ENCODE measurements at regions of chr7 and their contacts with region 1.

Region 1: DNA sequence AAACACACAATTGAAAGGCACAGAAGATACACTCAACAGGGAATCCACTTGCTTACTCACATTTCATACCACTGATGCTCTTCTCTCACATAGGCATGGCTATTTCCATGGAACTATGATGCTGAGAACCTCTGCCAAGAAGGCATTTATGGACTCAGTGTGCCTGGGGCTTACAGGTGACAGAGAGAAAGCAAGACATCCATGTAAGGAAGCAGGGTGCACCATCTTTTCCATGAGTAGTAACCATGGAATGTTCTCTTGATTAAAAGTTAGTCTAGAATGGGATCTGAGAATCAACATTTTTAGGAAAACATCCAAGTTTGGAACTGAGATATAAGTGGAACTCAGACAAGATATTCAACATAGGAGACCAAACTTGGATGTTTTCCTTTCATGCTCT is 52.5 kb upstream of the MACC1 start:
- DNase-seq: no peak
- ATAC-seq: peak in 1 of 8 donors; percentile 44
- H3K4me3 ChIP-seq: no peak overlapping the region
- H3K27ac ChIP-seq: peak overlapping the region in 4 of 10 donors; percentile 10 to 56 (median 31)
- H3K4me1 ChIP-seq: peaks cover 0 to 7% (median 0%) of the 10 kb centered on the region in 9 donors
- H3K27me3 ChIP-seq: no peaks in the 10 kb centered on the region
- CTCF ChIP-seq: no peak

Region 2: DNA sequence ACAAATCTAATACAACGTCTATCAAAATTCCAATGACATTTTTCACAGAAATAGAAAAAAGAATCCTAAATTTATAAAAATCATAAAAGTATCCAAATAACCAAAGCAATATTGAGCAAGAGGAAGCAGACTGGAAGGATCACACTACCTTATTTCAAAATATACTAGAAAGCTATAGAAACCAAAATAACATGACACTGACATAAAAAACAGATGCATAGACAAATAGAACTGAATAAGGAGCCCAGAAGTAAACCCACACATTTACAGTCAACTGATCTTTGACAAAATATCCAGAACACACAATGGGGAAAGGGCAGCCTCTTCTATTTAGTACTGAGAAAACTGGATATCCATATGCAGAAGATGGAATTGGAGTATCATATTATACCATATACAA is 270.0 kb before region 1 on chr7:
- intact Hi-C with region 1: no loop called
- DNase-seq: no peak
- ATAC-seq: no peak
- H3K4me3 ChIP-seq: no peak overlapping the region
- H3K27ac ChIP-seq: no peak overlapping the region
- H3K4me1 ChIP-seq: no peaks in the 10 kb centered on the region
- H3K27me3 ChIP-seq: no peaks in the 10 kb centered on the region
- CTCF ChIP-seq: no peak

Region 3: GRCh38 chr7:20227291-20227795 is 42.4 kb before region 1 on chr7:
- intact Hi-C with region 1: loop called in 1 of 10 experiments (anchors 2 kb)
- DNase-seq: no peak
- ATAC-seq: no peak
- H3K4me3 ChIP-seq: no peak overlapping the region
- H3K27ac ChIP-seq: no peak overlapping the region
- H3K4me1 ChIP-seq: peaks cover 0 to 26% (median 0%) of the 10 kb centered on the region in 9 donors
- H3K27me3 ChIP-seq: no peaks in the 10 kb centered on the region
- CTCF ChIP-seq: no peak

Region 4: DNA sequence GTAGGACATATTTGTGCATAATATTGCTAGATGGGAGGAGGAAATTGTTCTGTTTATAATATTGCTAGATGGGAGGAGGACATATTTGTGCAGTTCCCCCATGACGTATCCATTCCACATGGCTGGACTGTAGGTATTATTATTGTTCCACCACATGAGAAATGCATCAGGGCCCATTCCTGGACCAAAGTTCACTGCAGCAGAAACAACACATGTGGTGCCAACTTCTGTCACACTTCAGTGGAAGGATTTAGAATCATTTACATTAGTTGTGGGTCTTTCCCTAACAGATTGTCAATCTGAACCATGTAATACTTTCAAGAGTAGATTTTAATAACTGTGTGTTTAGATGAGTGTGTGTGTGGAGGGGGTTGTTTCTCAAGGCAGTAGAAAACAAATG is 19.8 kb before region 1 on chr7:
- intact Hi-C with region 1: loop called in 1 of 10 experiments (anchors 1 kb)
- DNase-seq: no peak
- ATAC-seq: no peak
- H3K4me3 ChIP-seq: no peak overlapping the region
- H3K27ac ChIP-seq: no peak overlapping the region
- H3K4me1 ChIP-seq: peaks cover 0 to 4% (median 0%) of the 10 kb centered on the region in 9 donors
- H3K27me3 ChIP-seq: no peaks in the 10 kb centered on the region
- CTCF ChIP-seq: no peak

Measured in heart right ventricle (tissue), 16 donors.